HCT116 (cell line): ENCODE measurements at regions of chr4 and their contacts with region 1.

Region 1: DNA sequence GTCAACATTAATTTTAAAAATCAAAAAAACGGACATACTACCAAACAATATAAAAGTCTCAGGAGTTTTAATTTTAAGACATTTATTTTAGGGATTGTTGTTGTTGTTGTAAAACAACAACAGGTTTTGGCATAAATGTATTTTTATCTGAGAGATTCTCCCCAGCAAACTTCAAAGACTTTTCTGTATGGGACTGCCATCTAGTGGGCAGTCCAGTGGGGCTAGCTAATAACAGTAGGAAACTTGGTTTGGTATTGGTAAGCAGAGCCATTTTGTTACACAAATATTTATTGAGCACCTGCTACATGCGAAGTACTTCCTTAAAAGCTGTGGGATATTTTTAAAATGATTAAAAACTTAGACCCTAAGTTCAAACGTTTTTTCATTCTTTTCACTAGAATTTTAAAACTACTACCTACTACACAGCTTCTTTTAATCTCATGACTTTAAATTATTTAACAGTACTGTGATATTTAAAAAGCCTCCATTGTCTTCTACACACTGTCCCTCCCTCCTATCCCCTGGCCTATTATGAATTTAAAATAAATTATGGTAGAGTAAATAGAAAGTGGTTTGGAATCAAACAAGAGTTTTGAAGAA is 1028.4 kb upstream of the INTU start:
- DNase-seq: peak; percentile 27
- ATAC-seq: peak; percentile 74
- H3K4me3 ChIP-seq: no peak overlapping the region
- H3K27ac ChIP-seq: no peak overlapping the region
- H3K4me1 ChIP-seq: no peaks in the 10 kb centered on the region
- H3K27me3 ChIP-seq: no peaks in the 10 kb centered on the region
- CTCF ChIP-seq: peak; percentile 44 to 80 (median 79); a peak in 5 of 6 replicates
- POLR2A ChIP-seq: no peak
- RAD21 ChIP-seq: peak; percentile 66

Region 2: DNA sequence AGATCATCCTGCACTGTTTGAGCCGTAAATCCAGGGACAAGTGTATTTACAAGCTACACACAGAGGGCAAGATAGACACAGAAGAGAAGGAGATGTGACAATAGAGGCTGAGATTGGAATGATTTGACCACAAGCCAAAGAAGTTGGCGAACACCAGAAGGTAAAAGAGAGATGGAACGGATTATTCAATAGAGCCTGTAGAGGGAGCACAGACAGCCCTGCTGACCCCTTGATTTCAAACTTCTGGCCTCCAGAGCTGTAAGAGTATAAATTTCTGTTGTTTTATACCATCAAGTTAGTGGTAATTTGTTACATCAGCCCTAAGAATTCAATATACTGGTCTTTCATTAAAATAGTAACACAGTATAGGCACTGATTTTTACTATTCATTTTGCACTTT is 841.8 kb before region 1 on chr4:
- CTCF ChIA-PET with region 1: no interaction called
- POLR2A ChIA-PET with region 1: no interaction called
- RAD21 ChIA-PET with region 1: no interaction called
- intact Hi-C with region 1: loop called (anchors 10 kb)
- DNase-seq: no peak
- ATAC-seq: peak; percentile 70
- H3K4me3 ChIP-seq: no peak overlapping the region
- H3K27ac ChIP-seq: no peak overlapping the region
- H3K4me1 ChIP-seq: no peaks in the 10 kb centered on the region
- H3K27me3 ChIP-seq: no peaks in the 10 kb centered on the region
- CTCF ChIP-seq: peak in 2 of 3 experiments; percentile 37 to 43; a peak in 4 of 6 replicates
- POLR2A ChIP-seq: no peak
- RAD21 ChIP-seq: 0 out of 2 replicates have a peak, but pooled peaks have one; percentile 22

Region 3: GRCh38 chr4:126614356-126614855 is 10.0 kb after region 1 on chr4:
- CTCF ChIA-PET with region 1: interaction called, 10 read pairs
- POLR2A ChIA-PET with region 1: no interaction called
- RAD21 ChIA-PET with region 1: no interaction called
- intact Hi-C with region 1: no loop called
- DNase-seq: no peak
- ATAC-seq: no peak
- H3K4me3 ChIP-seq: no peak overlapping the region
- H3K27ac ChIP-seq: no peak overlapping the region
- H3K4me1 ChIP-seq: no peaks in the 10 kb centered on the region
- H3K27me3 ChIP-seq: no peaks in the 10 kb centered on the region
- CTCF ChIP-seq: no peak
- POLR2A ChIP-seq: no peak
- RAD21 ChIP-seq: no peak